ENCODE measurements at regions of chr22 and their contacts with region 1.

Region 1: GRCh38 chr22:46006379-46007002 is 29.5 kb upstream of the WNT7B start:
- DNase-seq: peak; percentile 88
- ATAC-seq: peak; percentile 90
- H3K4me3 ChIP-seq: no peak overlapping the region
- H3K4me3 Mint-ChIP-seq: no peak overlapping the region
- H3K27ac ChIP-seq: no peak overlapping the region
- H3K27ac Mint-ChIP-seq: no peak overlapping the region
- H3K4me1 ChIP-seq: peaks cover 3 to 10% of the 10 kb centered on the region in 2 donors
- H3K4me1 Mint-ChIP-seq: peaks cover 6% of the 10 kb centered on the region
- H3K27me3 ChIP-seq: peaks cover 0 to 13% (median 0%) of the 10 kb centered on the region in 4 experiments
- H3K27me3 Mint-ChIP-seq: no peaks in the 10 kb centered on the region
- CTCF ChIP-seq: peak; percentile 90

Region 2: DNA sequence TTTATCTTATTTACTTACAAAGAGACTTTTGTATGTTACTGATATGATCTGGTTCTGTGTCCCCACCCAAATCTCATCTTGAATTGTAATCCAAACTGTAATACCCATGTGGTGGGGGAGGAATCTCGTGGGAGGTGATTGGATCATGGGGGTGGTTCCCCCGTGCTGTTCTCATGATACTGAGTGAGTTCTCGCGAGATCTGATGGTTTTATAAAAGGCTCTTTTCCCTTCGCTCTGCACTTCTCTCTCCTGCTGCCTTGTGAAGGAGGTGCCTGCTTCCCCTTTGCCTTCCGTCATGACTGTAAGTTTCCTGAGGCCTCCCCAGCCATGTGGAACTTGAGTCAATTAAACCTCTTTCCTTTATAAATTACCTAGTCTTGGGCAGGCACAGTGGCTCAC is 12.9 kb after region 1 on chr22:
- CTCF ChIA-PET with region 1: interaction called, 21 read pairs
- POLR2A ChIA-PET with region 1: no interaction called
- intact Hi-C with region 1: no loop called
- DNase-seq: no peak
- ATAC-seq: no peak
- H3K4me3 ChIP-seq: no peak overlapping the region
- H3K4me3 Mint-ChIP-seq: no peak overlapping the region
- H3K27ac ChIP-seq: no peak overlapping the region
- H3K27ac Mint-ChIP-seq: no peak overlapping the region
- H3K4me1 ChIP-seq: peaks cover 0 to 2% of the 10 kb centered on the region in 2 donors
- H3K4me1 Mint-ChIP-seq: no peaks in the 10 kb centered on the region
- H3K27me3 ChIP-seq: peaks cover 0 to 15% (median 2%) of the 10 kb centered on the region in 4 experiments
- H3K27me3 Mint-ChIP-seq: peaks cover 7% of the 10 kb centered on the region
- CTCF ChIP-seq: no peak

Region 3: DNA sequence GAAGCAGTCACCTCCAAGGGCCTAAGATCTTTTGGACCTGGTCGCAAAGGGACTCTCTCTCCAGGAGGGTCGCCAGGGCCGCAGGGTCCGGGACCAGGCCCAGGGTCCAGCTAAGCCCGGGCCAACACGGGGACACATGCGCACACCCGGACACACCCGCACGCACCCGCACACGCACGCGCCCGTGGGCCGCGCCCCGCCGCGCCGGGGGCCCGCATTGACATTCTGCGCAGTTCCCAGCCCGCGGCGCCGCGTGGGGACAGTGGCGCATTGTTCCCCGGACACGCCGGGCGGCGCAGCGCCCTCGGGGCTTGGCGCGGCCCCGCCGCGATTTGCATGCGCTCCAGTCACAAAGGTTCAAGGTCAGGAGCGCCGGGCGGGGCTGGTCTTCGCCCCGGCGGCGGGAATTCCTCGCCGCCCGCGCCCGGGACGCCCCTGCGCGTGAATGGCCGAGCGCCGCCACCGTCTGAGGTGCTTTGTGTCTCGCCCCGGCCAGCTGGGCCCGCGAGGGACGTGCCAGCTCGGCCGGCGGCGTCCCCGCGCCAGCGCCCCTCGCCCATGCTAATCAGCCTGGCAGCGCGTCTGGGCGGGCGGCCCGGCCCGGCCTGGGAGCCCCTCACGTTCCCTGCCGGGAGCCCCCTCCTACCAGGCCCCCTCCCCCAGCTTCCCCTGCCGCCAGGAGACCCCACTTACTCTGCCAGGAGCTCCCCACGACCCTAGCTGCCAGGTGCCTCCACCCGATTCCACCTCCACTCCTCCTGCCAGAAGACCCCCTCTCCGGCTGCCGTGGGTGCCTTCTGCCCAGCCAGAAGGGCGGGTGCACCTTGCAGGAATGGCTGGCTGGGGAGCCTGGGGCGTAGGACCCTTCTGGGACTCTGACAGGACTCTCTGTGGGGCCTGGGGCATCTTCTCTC is 21.0 kb after region 1 on chr22:
- CTCF ChIA-PET with region 1: interaction called, 21 read pairs
- POLR2A ChIA-PET with region 1: no interaction called
- intact Hi-C with region 1: no loop called
- DNase-seq: no peak
- ATAC-seq: peak; percentile 47
- H3K4me3 ChIP-seq: peak overlapping the region in 1 of 5 experiments; percentile 15
- H3K4me3 Mint-ChIP-seq: peak overlapping the region; percentile 67
- H3K27ac ChIP-seq: no peak overlapping the region
- H3K27ac Mint-ChIP-seq: no peak overlapping the region
- H3K4me1 ChIP-seq: no peaks in the 10 kb centered on the region
- H3K4me1 Mint-ChIP-seq: peaks cover 7% of the 10 kb centered on the region
- H3K27me3 ChIP-seq: peaks cover 0 to 51% (median 20%) of the 10 kb centered on the region in 4 experiments
- H3K27me3 Mint-ChIP-seq: peaks cover 39% of the 10 kb centered on the region
- CTCF ChIP-seq: no peak